ENCODE measurements at regions of chr5 and their contacts with region 1.

Region 1: GRCh38 chr5:91383027-91383955 is at the start of gene ARRDC3:
- DNase-seq: peak; percentile 97
- ATAC-seq: peak; percentile 43
- H3K4me3 Mint-ChIP-seq: peak within 1 kb of the TSS; percentile 93
- H3K27ac Mint-ChIP-seq: peak within 1 kb of the TSS; percentile 97
- H3K4me1 Mint-ChIP-seq: peaks cover 28% of the 10 kb centered on the region
- H3K27me3 Mint-ChIP-seq: no peaks in the 10 kb centered on the region
- CTCF ChIP-seq: no peak
- total RNA-seq, gene ARRDC3: 56.3 and 65.3 TPM in 2 replicates

Region 2: DNA sequence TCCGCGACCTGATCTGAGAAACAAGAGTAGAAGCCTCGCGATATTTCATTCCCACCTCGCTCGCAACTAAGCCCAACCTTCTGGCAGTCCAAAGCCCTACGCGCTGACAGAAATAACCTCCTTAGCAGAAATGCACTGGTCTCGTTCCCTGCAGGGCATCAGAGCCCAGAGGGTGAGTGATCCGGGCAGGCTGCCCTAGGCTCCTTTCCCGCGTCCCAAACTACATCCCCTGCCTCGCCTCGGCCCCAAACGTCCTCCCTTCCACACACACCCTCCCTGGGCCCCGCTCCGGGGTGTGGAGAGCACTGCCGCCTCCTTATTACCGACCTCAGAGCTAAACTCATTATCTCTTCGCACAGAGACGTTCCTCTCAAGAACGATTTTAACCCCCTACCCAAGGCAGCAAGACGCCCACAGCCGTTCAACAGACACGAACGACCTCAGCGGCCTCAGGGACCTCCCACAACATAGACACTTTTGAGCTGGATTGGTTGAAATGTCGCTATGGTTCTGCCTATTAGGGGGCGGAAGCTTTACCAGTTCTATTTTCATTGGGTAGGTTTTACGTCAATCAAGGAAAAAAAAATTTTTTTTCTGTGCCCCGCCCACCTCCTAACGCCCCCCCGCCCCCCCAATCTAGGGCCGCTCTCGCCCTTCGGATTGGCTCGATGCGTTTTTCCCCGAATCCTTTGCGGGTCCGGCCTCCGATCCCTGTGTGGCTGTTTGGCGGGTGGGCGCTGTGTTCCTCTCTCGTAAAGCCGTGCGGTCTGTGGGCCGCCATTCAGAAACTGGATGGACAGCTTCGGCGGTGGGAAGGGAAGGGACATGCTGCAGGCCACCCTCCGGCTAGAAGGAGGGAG is 973.7 kb before region 1 on chr5 and contains the start of gene CETN3:
- CTCF ChIA-PET with region 1: no interaction called
- POLR2A ChIA-PET with region 1: interaction called, 18 read pairs
- intact Hi-C with region 1: loop called (anchors 1 kb)
- DNase-seq: peak; percentile 79
- ATAC-seq: peak; percentile 93
- H3K4me3 Mint-ChIP-seq: no peak within 1 kb of the TSS
- H3K27ac Mint-ChIP-seq: no peak within 1 kb of the TSS
- H3K4me1 Mint-ChIP-seq: peaks cover 11% of the 10 kb centered on the region
- H3K27me3 Mint-ChIP-seq: no peaks in the 10 kb centered on the region
- CTCF ChIP-seq: no peak
- total RNA-seq, gene CETN3: 19.1 and 20.3 TPM in 2 replicates

Region 3: DNA sequence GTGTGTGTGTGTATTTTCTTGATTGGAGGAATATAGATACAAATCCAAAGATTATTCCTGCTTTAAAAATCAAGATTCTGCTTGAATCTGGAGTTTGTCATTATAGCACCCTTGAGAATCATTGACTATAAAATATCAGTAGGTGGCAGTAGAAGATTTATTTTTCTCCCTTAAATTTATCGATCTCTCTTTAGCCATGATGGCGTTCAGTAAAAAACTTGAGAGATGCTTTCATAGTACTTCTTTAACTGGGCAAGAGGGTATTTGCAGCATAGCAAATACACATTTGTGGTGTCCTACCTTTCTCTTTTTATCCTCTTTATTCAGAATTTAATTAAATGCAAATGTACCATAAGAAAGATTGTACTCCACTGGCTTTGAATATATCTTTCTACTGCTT is 517.0 kb before region 1 on chr5:
- CTCF ChIA-PET with region 1: interaction called, 42 read pairs
- POLR2A ChIA-PET with region 1: interaction called, 3 read pairs
- intact Hi-C with region 1: loop called (anchors 1 kb)
- DNase-seq: no peak
- ATAC-seq: peak; percentile 37
- H3K4me3 Mint-ChIP-seq: no peak overlapping the region
- H3K27ac Mint-ChIP-seq: no peak overlapping the region
- H3K4me1 Mint-ChIP-seq: peaks cover 2% of the 10 kb centered on the region
- H3K27me3 Mint-ChIP-seq: no peaks in the 10 kb centered on the region
- CTCF ChIP-seq: no peak

Region 4: DNA sequence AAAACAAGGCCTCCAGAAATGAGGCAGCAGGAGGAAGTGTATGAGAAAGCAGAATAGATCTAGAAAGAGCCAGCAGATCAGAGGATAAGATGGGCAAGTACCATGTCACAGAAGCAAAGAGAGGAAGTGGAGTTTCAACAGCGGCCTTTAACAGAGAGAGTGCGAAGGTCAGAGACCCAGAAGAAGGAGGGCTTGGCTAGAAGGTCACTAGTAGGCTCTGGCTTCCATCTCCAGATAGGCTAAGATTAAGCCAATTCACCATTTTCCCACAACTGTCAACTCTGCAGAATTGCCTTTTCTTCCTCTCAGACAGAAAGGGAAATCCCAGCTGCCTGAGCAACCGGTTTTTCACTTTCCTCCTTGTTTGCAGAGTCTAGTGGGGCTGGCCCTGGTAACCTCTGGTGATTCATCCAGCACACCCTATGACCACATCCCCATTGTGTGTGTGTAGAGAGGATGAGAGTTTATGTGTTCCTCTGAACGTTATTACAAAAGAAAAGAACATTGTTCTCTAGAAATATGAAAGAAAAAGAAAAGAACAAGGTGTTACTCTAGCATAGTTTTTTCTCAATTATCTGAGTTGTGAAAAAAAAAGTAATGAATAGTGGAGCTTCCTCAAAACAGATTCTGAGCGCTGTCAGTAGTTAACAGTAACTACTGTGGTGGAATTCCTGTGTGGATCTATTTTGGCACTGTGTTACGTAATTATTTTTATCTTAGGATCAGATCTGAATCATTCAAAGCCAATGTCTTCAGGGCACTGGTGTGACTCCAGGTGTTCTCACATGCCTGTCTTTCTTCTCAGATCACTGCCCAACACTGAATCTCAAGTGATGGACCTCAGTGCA is 220.5 kb before region 1 on chr5:
- CTCF ChIA-PET with region 1: no interaction called
- POLR2A ChIA-PET with region 1: interaction called, 6 read pairs
- intact Hi-C with region 1: loop called (anchors 2 kb)
- DNase-seq: no peak
- ATAC-seq: peak; percentile 96
- H3K4me3 Mint-ChIP-seq: no peak overlapping the region
- H3K27ac Mint-ChIP-seq: peak overlapping the region; percentile 54
- H3K4me1 Mint-ChIP-seq: peaks cover 16% of the 10 kb centered on the region
- H3K27me3 Mint-ChIP-seq: no peaks in the 10 kb centered on the region
- CTCF ChIP-seq: no peak

Region 5: DNA sequence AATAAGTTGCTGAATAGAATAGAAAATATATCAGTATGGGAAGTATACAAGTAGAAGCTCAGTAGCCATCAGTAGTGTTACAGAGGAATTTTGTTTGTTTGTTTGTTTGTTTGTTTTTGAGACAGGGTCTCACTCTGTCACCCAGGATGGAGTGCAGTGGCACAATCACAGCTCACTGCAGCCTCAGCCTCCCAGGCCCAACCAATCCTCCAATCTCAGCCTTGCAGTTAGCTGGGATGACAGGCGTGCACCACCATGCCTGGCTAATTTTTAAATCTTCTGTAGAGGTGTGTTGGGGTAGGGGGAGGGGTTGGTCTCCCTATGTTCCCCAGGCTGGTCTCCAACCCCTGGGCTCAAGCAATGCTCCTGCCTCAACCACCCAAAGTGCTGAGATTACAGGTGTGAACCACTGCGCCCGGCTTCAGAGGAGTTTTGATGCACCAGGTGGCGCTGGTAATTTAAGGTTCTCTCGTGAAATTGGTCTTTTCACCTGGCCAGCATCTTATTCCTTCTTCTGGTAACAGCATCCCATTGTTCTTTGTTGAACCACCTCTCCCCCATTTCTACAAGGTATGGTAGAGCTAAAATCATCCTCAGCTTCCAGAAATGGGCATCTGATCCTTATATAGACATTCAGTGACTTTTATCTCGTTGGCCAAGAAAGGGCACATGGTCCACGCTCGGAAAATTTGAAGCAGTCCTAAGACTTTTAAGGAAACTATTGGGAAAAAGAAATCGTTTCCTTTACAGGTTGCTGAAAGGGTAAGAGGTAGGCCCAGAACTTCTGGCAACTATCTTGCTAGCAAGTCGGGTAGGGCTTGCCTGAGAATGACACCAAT is 157.2 kb before region 1 on chr5:
- CTCF ChIA-PET with region 1: interaction called, 153 read pairs
- POLR2A ChIA-PET with region 1: interaction called, 8 read pairs
- intact Hi-C with region 1: loop called (anchors 1 kb)
- DNase-seq: peak; percentile 22
- ATAC-seq: peak; percentile 66
- H3K4me3 Mint-ChIP-seq: no peak overlapping the region
- H3K27ac Mint-ChIP-seq: no peak overlapping the region
- H3K4me1 Mint-ChIP-seq: no peaks in the 10 kb centered on the region
- H3K27me3 Mint-ChIP-seq: peaks cover under 1% of the 10 kb centered on the region
- CTCF ChIP-seq: peak; percentile 27

Region 6: GRCh38 chr5:91301106-91301846 is 82.0 kb before region 1 on chr5:
- CTCF ChIA-PET with region 1: no interaction called
- POLR2A ChIA-PET with region 1: interaction called, 11 read pairs
- intact Hi-C with region 1: no loop called
- DNase-seq: no peak
- ATAC-seq: no peak
- H3K4me3 Mint-ChIP-seq: no peak overlapping the region
- H3K27ac Mint-ChIP-seq: no peak overlapping the region
- H3K4me1 Mint-ChIP-seq: no peaks in the 10 kb centered on the region
- H3K27me3 Mint-ChIP-seq: no peaks in the 10 kb centered on the region
- CTCF ChIP-seq: no peak

Region 7: GRCh38 chr5:91361055-91361701 is 22.1 kb before region 1 on chr5:
- CTCF ChIA-PET with region 1: interaction called, 3 read pairs
- POLR2A ChIA-PET with region 1: interaction called, 103 read pairs
- intact Hi-C with region 1: loop called (anchors 2 kb)
- DNase-seq: no peak
- ATAC-seq: peak; percentile 47
- H3K4me3 Mint-ChIP-seq: peak overlapping the region; percentile 17
- H3K27ac Mint-ChIP-seq: peak overlapping the region; percentile 57
- H3K4me1 Mint-ChIP-seq: peaks cover 21% of the 10 kb centered on the region
- H3K27me3 Mint-ChIP-seq: no peaks in the 10 kb centered on the region
- CTCF ChIP-seq: no peak

Measured in activated B cell treated with CpG ODN at 0.5 μM for 24 hours (primary cell).